ENCODE measurements at regions of chr14 and their contacts with region 1.

Region 1: GRCh38 chr14:21269252-21270046 is at the start of gene HNRNPC:
- DNase-seq: peak; percentile 100
- ATAC-seq: peak; percentile 96
- H3K4me3 ChIP-seq: peak within 1 kb of the TSS; percentile 86 to 98 (median 90)
- H3K27ac ChIP-seq: peak within 1 kb of the TSS; percentile 92
- H3K4me1 ChIP-seq: peaks cover 32% of the 10 kb centered on the region
- H3K27me3 ChIP-seq: peaks cover 0 to 5% of the 10 kb centered on the region in 2 experiments; a peak in 2 of 5 replicates
- CTCF ChIP-seq: no peak
- EP300 ChIP-seq: peak; percentile 31 to 58; a peak in 2 of 4 replicates
- POLR2A ChIP-seq: peak; percentile 99
- RAD21 ChIP-seq: peak; percentile 42; the same call in 1 of the 2 replicates
- total RNA-seq, gene HNRNPC: 1,099 and 1,563 TPM in 2 replicates

Region 2: DNA sequence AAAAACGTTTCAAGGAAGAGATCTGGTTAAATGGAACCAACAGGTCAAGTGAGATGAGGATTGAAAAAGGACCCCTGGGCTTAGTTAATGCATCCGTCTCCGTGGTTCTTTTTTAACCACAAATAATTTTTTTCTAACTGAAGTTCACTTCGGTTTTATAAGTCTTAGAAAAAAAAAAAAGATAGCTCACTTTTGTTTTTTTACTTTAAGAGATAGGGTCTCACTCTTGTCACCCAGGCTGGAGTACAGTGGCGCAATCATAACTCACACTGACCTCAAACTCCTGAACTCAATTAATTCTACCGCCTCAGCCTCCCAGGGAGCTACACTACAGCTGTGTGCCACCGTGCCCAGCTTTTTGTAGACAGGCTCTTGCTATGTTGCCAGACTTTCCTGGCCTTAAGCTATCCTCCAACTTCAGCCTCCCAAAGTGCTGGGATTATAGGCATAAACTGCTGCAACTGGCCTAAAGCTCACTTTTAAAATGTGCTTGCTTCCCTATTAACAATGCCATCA is 12.0 kb before region 1 on chr14:
- CTCF ChIA-PET with region 1: no interaction called
- POLR2A ChIA-PET with region 1: interaction called, 68 read pairs
- in situ Hi-C with region 1: no loop called
- intact Hi-C with region 1: no loop called
- DNase-seq: no peak
- ATAC-seq: peak; percentile 36
- H3K4me3 ChIP-seq: no peak overlapping the region
- H3K27ac ChIP-seq: peak overlapping the region; percentile 1
- H3K4me1 ChIP-seq: peaks cover 78% of the 10 kb centered on the region
- H3K27me3 ChIP-seq: no peaks in the 10 kb centered on the region
- CTCF ChIP-seq: no peak
- EP300 ChIP-seq: no peak
- POLR2A ChIP-seq: peak in 1 of 2 experiments; percentile 63; a peak in 2 of 4 replicates
- RAD21 ChIP-seq: no peak

Region 3: DNA sequence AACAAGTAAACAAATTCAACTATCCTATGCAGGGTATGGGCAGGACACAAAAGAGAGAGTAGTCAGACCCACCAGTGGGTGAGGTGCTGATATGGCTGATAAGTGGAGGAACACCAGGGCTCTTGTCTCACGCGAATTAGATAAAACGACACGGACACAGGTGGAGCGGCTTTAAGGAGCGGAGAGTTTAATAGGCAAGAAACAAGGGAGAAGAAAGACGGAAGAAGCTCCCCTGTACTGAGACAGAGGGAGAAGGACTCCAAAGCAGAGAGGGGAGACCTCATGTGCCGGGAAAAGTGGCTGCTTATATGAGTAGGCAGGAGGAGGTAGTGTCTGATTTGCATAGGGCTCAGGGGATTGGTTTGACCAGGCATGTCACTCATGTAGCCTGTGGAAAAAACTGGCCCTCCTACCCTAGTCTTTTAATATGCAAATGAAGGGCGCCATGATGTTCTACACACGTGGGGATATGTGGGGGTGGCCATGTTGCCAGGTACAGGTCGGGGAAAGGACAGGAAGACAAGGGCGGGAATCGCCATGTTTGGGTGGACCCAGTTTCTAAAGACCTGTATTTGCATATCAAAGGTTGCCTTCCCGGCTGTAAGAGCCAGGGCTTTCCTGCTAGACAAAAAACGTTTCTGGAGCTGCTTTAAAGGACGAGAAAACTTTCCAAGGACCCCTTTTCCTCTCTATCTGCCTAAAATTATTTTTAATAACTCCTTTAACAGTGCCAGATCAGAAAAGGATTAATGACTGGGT is 39.2 kb after region 1 on chr14:
- CTCF ChIA-PET with region 1: no interaction called
- POLR2A ChIA-PET with region 1: interaction called, 7 read pairs
- in situ Hi-C with region 1: no loop called
- intact Hi-C with region 1: loop called (anchors 2 kb)
- DNase-seq: peak; percentile 100
- ATAC-seq: peak; percentile 95
- H3K4me3 ChIP-seq: peak overlapping the region; percentile 50 to 70 (median 59)
- H3K27ac ChIP-seq: peak overlapping the region; percentile 88
- H3K4me1 ChIP-seq: peaks cover 37% of the 10 kb centered on the region
- H3K27me3 ChIP-seq: no peaks in the 10 kb centered on the region; a peak in 1 of 5 replicates
- CTCF ChIP-seq: no peak
- EP300 ChIP-seq: 0 out of 4 replicates have a peak, but pooled peaks of 1 of the 2 experiments have one; percentile 12
- POLR2A ChIP-seq: peak; percentile 94 to 95
- RAD21 ChIP-seq: no peak

Region 4: DNA sequence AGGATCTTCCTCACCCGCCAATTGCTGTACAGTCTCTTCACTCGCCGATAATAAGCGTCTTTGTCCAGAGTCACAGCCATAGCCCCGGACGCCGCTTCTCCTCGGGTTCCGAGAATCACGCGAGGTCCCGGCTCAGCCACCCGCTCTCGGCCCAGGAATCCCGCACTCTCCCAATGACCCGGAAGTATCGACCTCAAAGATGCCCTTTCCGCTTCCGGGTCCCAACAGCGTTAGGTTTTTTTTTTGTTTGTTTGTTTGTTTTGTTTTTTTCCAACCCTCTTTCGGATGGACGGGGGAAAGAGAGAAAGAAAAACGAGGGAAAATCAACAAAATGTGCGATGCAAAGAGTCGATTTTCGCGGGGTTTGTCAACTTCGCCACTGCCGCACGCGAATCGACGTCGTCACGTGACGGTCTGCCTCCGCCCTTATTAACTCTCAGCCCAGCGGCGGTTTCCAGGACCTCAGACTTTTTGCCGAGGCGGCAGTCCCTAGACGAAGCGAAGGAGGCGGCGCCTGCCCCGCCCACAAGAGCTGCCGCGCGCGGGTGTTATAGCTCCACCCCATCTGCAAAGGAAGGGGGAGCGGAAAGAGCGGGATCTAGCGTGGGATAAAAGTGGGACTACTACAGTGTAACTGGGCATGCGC is 114.5 kb after region 1 on chr14 and contains the start of gene SUPT16H:
- CTCF ChIA-PET with region 1: no interaction called
- POLR2A ChIA-PET with region 1: interaction called, 6 read pairs
- in situ Hi-C with region 1: no loop called
- intact Hi-C with region 1: loop called (anchors 1 kb)
- DNase-seq: peak; percentile 94
- ATAC-seq: peak; percentile 91
- H3K4me3 ChIP-seq: peak within 1 kb of the TSS; percentile 74 to 97 (median 90)
- H3K27ac ChIP-seq: peak within 1 kb of the TSS; percentile 92
- H3K4me1 ChIP-seq: peaks cover 43% of the 10 kb centered on the region
- H3K27me3 ChIP-seq: no peaks in the 10 kb centered on the region; a peak in 1 of 5 replicates
- CTCF ChIP-seq: peak; percentile 11; the same call in 1 of the 2 replicates
- EP300 ChIP-seq: peak in 1 of 2 experiments; percentile 25; a peak in 2 of 4 replicates
- POLR2A ChIP-seq: peak; percentile 80 to 92
- RAD21 ChIP-seq: peak; percentile 46; the same call in 1 of the 2 replicates
- total RNA-seq, gene SUPT16H: 230 and 340 TPM in 2 replicates

Measured in HepG2 (cell line).